Dendritic cell treated with granulocyte-macrophage colony-stimulating factor and Interleukin-4, amounts not matched to agents 40 ng/mL and 50 ng/mL, for 4 days (primary cell): ENCODE measurements at regions of chr12 and their contacts with region 1.

Region 1: DNA sequence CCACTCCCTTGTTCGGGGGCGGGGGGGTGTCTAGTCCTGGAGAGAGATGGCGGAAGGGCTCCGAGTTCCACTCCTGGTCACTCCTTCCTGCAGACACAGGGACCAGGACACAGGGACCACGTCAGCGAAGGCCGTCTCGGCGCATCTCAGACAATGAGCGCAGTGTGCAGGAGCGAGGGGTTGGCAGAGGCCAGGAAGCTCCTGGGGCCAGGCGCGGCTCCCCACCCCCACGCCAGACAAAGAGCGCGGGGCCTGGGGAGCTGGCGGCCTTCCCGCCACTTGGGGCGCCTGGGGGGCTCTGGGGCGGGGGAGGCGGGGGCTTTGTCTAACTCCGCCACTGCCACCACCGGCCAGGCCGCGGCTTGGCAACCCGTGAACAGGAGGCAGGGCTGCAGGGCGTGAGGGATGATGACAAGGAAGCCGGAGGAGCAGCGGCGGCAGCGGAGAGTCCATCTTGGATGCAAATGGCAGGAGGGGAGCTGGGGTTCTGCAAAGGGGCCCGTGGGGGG is 2.2 kb downstream of the CDK2AP1 start:
- H3K4me3 Mint-ChIP-seq: peak overlapping the region; percentile 83
- H3K27ac Mint-ChIP-seq: peak overlapping the region; percentile 73
- H3K4me1 Mint-ChIP-seq: peaks cover 56% of the 10 kb centered on the region
- H3K27me3 Mint-ChIP-seq: peaks cover 2% of the 10 kb centered on the region

Region 2: DNA sequence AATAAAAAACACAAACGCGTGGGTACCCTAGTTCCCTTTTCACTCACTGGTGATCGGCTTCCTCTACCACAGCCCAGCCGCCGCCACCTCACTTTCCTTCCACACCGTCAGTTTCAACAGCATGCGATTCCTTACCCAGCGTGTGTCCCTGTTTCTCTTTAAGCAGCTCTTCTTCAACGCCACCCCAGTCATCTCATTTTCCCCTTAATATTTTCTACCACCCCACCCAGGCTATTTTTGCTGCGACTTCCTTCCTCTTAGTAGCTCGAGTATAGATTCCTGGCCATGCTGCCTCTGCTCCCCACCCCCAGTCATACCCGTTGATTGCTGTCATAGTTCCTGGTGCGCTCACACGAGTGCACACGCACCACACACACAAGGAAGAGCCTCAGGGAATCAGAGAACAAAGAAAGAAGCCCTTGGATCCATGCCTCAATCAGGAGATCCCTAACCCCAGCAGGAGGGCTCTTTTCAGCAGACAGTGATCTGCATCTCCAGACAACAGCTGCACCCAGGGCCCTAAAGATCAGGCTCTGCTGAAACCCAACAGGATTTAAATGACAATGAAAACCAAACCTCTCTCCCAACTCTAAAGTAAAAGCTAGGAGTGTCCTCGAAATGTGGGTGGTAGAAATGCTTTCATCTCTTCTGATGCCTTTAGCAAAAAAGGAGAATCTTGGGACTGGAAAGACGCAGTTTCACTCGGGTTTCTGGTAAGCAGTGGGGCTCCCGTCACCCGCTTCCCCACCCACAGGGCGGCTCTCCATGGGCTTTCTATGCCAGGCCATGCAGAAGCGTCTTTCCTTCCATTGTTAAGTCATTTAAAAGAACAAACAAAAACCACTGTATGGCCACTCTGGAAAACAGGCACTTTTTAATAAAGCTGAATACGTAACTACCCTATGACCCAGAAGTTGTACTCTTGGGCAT is 397.3 kb before region 1 on chr12:
- intact Hi-C with region 1: no loop called
- H3K4me3 Mint-ChIP-seq: peak overlapping the region; percentile 71
- H3K27ac Mint-ChIP-seq: peak overlapping the region; percentile 93
- H3K4me1 Mint-ChIP-seq: peaks cover 74% of the 10 kb centered on the region
- H3K27me3 Mint-ChIP-seq: no peaks in the 10 kb centered on the region

Region 3: GRCh38 chr12:123319826-123320225 is 50.4 kb after region 1 on chr12:
- intact Hi-C with region 1: loop called (anchors 10 kb)
- H3K4me3 Mint-ChIP-seq: no peak overlapping the region
- H3K27ac Mint-ChIP-seq: no peak overlapping the region
- H3K4me1 Mint-ChIP-seq: no peaks in the 10 kb centered on the region
- H3K27me3 Mint-ChIP-seq: no peaks in the 10 kb centered on the region

Region 4: GRCh38 chr12:123478762-123479161 is 209.3 kb after region 1 on chr12:
- intact Hi-C with region 1: no loop called
- H3K4me3 Mint-ChIP-seq: no peak overlapping the region
- H3K27ac Mint-ChIP-seq: no peak overlapping the region
- H3K4me1 Mint-ChIP-seq: peaks cover 18% of the 10 kb centered on the region
- H3K27me3 Mint-ChIP-seq: peaks cover 4% of the 10 kb centered on the region